ENCODE measurements at regions of chr22 and their contacts with region 1.

Region 1: DNA sequence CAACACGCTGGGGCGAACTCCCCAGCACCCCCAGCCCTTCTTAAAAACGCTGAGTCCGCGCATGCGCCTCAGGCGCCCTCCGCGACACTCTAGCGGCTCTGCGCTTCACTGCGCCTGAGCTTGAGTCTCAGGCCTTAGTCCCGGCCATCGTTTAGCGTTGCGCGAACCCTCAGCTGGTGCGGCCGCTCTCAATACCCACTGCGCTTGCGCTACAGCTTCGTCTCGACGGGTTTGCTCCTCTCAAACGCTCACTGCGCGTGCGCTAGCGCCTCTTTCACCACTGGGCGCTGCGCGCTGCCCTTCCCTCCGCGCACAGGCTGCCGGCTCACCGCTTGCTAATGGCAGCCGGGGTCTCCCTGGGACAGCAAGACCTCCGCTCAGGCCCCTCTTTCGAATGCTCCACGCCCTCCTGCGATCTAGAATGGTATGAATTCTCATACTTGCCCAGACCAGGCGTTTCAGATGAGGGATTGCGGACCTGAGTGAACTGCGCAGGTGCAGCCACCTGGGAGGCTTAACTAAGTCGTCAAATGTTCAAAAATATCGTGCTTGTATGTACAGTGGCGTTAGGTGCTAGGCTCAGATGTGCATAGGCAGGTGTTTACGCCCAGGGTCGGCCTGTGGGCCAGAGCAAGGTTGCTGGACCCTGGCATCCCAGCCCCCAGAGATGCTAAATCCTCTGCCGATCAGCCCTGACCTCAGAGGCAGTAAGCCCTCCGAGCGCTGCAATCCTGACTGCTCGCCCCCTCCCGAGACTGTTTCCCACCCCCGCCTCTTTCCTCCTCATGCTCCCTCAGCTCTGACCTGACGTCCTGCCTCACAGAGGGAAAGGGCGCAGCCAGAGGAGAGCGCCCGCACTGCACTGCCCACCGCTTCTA is at the start of gene SLC2A11:
- DNase-seq: peak; percentile 86 to 96 (median 90)
- H3K4me3 ChIP-seq: peak within 1 kb of the TSS; percentile 82
- H3K4me3 Mint-ChIP-seq: peak within 1 kb of the TSS; percentile 92 to 98 (median 94)
- H3K27ac ChIP-seq: peak within 1 kb of the TSS; percentile 73
- H3K27ac Mint-ChIP-seq: peak within 1 kb of the TSS; percentile 73 to 97 (median 90)
- H3K4me1 ChIP-seq: peaks cover 17% of the 10 kb centered on the region
- H3K4me1 Mint-ChIP-seq: peaks cover 14 to 24% (median 21%) of the 10 kb centered on the region in 3 donors
- H3K27me3 ChIP-seq: no peaks in the 10 kb centered on the region
- H3K27me3 Mint-ChIP-seq: no peaks in the 10 kb centered on the region
- total RNA-seq, gene SLC2A11: 7.1 to 9.0 TPM

Region 2: GRCh38 chr22:23772649-23773495 is 85.0 kb before region 1 on chr22 and contains the start of gene MMP11:
- CTCF ChIA-PET with region 1: interaction called, 10 read pairs
- POLR2A ChIA-PET with region 1: interaction called, 4 read pairs
- DNase-seq: peak in 4 of 5 donors; percentile 42 to 70 (median 48)
- H3K4me3 ChIP-seq: no peak within 1 kb of the TSS
- H3K4me3 Mint-ChIP-seq: peak within 1 kb of the TSS; percentile 45 to 87 (median 72)
- H3K27ac ChIP-seq: no peak within 1 kb of the TSS
- H3K27ac Mint-ChIP-seq: peak within 1 kb of the TSS in 3 of 8 donors; percentile 1 to 47 (median 3)
- H3K4me1 ChIP-seq: peaks cover 13% of the 10 kb centered on the region
- H3K4me1 Mint-ChIP-seq: peaks cover 11 to 27% (median 12%) of the 10 kb centered on the region in 3 donors
- H3K27me3 ChIP-seq: no peaks in the 10 kb centered on the region
- H3K27me3 Mint-ChIP-seq: no peaks in the 10 kb centered on the region
- total RNA-seq, gene MMP11: 0.90 to 1.6 TPM

Region 3: DNA sequence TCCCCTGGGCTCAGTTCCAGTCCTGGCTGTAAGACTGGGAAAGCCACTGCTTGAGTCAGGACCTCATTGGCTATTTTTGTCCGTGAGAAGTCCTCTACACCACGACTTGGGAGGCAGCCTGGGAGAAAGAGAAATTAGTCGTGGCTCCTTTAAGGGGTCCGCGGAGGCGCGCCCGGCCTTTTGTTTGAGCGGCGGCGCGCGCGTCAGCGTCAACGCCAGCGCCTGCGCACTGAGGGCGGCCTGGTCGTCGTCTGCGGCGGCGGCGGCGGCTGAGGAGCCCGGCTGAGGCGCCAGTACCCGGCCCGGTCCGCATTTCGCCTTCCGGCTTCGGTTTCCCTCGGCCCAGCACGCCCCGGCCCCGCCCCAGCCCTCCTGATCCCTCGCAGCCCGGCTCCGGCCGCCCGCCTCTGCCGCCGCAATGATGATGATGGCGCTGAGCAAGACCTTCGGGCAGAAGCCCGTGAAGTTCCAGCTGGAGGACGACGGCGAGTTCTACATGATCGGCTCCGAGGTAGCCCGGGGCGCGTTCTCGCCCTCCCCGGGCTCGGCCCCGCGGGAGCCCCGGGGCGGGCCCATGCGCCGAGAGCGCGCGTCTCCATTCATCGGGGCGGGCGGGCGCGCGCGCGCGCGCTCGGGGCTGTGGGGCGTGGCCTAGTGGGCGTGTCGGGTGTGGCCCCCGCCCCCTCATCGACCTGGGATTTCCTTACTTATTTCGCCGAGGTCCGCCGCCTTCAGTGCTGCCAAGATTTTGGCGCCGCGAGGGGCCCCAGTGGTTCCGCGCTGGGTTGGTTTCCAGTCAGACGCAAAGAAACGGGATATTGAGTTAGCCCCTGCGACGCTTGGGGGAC is 70.9 kb before region 1 on chr22 and contains the start of gene SMARCB1:
- CTCF ChIA-PET with region 1: no interaction called
- POLR2A ChIA-PET with region 1: no interaction called
- DNase-seq: peak; percentile 85 to 92 (median 86)
- H3K4me3 ChIP-seq: peak within 1 kb of the TSS; percentile 72
- H3K4me3 Mint-ChIP-seq: peak within 1 kb of the TSS; percentile 88 to 92 (median 91)
- H3K27ac ChIP-seq: peak within 1 kb of the TSS; percentile 87
- H3K27ac Mint-ChIP-seq: peak within 1 kb of the TSS; percentile 90 to 98 (median 93)
- H3K4me1 ChIP-seq: peaks cover 30% of the 10 kb centered on the region
- H3K4me1 Mint-ChIP-seq: peaks cover 29 to 51% (median 30%) of the 10 kb centered on the region in 3 donors
- H3K27me3 ChIP-seq: no peaks in the 10 kb centered on the region
- H3K27me3 Mint-ChIP-seq: no peaks in the 10 kb centered on the region
- total RNA-seq, gene SMARCB1: 113 to 120 TPM

Region 4: DNA sequence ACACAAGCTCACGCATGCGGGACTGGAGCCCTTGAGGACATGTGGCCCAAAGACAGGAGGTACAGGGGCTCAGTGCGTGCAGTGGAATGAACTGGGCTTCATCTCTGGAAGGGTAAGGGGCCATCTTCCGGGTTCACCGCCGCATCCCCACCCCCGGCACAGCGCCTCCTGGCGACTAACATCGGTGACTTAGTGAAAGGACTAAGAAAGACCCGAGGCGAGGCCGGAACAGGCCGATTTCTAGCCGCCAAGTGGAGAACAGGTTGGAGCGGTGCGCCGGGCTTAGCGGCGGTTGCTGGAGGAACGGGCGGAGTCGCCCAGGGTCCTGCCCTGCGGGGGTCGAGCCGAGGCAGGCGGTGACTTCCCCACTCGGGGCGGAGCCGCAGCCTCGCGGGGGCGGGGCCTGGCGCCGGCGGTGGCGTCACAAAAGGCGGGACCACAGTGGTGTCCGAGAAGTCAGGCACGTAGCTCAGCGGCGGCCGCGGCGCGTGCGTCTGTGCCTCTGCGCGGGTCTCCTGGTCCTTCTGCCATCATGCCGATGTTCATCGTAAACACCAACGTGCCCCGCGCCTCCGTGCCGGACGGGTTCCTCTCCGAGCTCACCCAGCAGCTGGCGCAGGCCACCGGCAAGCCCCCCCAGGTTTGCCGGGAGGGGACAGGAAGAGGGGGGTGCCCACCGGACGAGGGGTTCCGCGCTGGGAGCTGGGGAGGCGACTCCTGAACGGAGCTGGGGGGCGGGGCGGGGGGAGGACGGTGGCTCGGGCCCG is 36.3 kb after region 1 on chr22 and contains the start of gene MIF:
- CTCF ChIA-PET with region 1: interaction called, 28 read pairs
- POLR2A ChIA-PET with region 1: interaction called, 30 read pairs
- DNase-seq: peak; percentile 91 to 96 (median 94)
- H3K4me3 ChIP-seq: peak within 1 kb of the TSS; percentile 90
- H3K4me3 Mint-ChIP-seq: peak within 1 kb of the TSS; percentile 90 to 97 (median 94)
- H3K27ac ChIP-seq: peak within 1 kb of the TSS; percentile 95
- H3K27ac Mint-ChIP-seq: peak within 1 kb of the TSS; percentile 93 to 99 (median 96)
- H3K4me1 ChIP-seq: peaks cover 20% of the 10 kb centered on the region
- H3K4me1 Mint-ChIP-seq: peaks cover 25 to 34% (median 27%) of the 10 kb centered on the region in 3 donors
- H3K27me3 ChIP-seq: no peaks in the 10 kb centered on the region
- H3K27me3 Mint-ChIP-seq: peaks cover 0 to 2% of the 10 kb centered on the region in 2 donors
- total RNA-seq, gene MIF: 804 to 830 TPM